ENCODE measurements at regions of chr1 and their contacts with region 1.

Region 1: GRCh38 chr1:212455803-212456528 is 23.2 kb downstream of the NENF start:
- DNase-seq: peak; percentile 88
- H3K4me3 Mint-ChIP-seq: no peak overlapping the region
- H3K27ac Mint-ChIP-seq: no peak overlapping the region
- H3K4me1 Mint-ChIP-seq: peaks cover 3% of the 10 kb centered on the region
- H3K27me3 Mint-ChIP-seq: no peaks in the 10 kb centered on the region

Region 2: GRCh38 chr1:211698161-211699026 is 757.6 kb before region 1 on chr1:
- CTCF ChIA-PET with region 1: interaction called, 36 read pairs
- POLR2A ChIA-PET with region 1: no interaction called
- intact Hi-C with region 1: loop called (anchors 5 kb)
- DNase-seq: peak; percentile 90
- H3K4me3 Mint-ChIP-seq: peak overlapping the region; percentile 22
- H3K27ac Mint-ChIP-seq: no peak overlapping the region
- H3K4me1 Mint-ChIP-seq: peaks cover 16% of the 10 kb centered on the region
- H3K27me3 Mint-ChIP-seq: no peaks in the 10 kb centered on the region

Region 3: GRCh38 chr1:212062832-212063438 is 393.0 kb before region 1 on chr1:
- CTCF ChIA-PET with region 1: interaction called, 75 read pairs
- POLR2A ChIA-PET with region 1: no interaction called
- intact Hi-C with region 1: loop called (anchors 2 kb)
- DNase-seq: no peak
- H3K4me3 Mint-ChIP-seq: no peak overlapping the region
- H3K27ac Mint-ChIP-seq: no peak overlapping the region
- H3K4me1 Mint-ChIP-seq: peaks cover 4% of the 10 kb centered on the region
- H3K27me3 Mint-ChIP-seq: no peaks in the 10 kb centered on the region

Region 4: DNA sequence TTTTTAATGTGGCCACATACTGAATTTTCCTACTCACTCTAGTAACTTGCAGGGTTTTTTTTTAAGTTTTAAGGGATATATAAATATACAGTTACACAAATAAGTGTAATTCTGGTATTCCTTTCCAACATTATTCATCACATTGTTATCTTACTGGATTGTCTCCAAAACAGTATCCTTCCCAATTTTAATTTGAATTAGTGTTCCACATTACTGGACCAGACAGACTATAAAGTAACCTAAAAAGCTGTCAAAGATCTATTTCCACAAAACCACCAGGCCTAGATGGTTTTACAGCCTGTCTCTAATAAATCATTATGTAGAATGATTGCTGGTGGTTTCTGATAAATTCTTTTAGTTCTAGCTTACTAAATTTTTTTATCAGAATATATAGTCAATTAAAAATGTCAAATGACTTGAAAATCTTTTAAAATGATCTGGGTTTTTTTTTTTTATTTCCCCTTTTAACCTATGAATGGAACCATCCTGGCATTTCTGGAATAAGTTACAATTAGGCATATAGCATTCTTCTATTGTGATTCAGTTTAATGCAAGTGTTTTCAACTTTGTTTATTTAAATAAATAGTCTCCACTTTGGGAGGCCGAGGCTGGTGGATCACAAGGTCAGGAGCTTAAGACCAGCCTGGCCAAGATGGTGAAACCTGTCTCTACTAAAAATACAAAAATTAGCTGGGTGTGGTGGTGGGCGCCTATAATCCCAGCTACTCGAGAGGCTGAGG is 100.6 kb before region 1 on chr1:
- CTCF ChIA-PET with region 1: interaction called, 21 read pairs
- POLR2A ChIA-PET with region 1: no interaction called
- intact Hi-C with region 1: no loop called
- DNase-seq: no peak
- H3K4me3 Mint-ChIP-seq: no peak overlapping the region
- H3K27ac Mint-ChIP-seq: no peak overlapping the region
- H3K4me1 Mint-ChIP-seq: peaks cover 22% of the 10 kb centered on the region
- H3K27me3 Mint-ChIP-seq: no peaks in the 10 kb centered on the region

Region 5: DNA sequence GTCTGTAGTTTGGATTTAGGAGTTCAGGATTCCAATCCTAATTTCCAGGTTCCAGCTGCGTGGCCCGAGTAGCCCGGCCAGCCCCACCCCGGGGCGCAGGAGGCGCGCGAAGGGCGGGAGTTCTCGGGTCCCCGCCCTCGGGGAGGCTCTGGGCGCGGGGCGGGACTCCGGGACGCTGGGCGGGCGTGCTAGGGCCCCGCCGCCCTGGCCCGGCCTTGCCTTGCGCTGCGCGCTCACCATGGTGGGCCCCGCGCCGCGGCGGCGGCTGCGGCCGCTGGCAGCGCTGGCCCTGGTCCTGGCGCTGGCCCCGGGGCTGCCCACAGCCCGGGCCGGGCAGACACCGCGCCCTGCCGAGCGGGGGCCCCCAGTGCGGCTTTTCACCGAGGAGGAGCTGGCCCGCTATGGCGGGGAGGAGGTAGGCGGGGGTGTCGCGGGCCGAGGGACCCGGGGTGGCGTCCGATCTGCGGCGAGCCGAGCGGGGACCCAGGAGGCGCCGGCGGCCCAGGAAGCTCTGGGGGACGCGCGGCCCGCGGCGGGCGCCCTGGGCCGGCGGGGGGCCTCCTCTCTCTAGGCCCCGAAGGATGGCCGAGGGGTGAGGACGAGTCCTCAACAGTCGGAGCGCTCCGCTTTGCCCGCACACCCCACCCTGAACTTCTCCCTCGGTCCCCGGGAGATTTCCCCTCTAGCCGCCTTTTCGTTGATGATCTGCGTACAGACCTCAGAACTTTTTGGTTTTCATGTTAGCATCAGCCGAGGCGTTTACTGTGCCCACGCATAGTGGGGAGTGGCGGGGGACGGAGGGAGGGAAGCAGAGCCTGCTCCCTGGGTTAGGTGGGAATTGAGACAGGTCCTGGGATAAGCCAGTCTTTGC is 23.0 kb before region 1 on chr1 and contains the start of gene NENF:
- CTCF ChIA-PET with region 1: interaction called, 32 read pairs
- POLR2A ChIA-PET with region 1: no interaction called
- intact Hi-C with region 1: no loop called
- DNase-seq: peak; percentile 84
- H3K4me3 Mint-ChIP-seq: peak within 1 kb of the TSS; percentile 73
- H3K27ac Mint-ChIP-seq: no peak within 1 kb of the TSS
- H3K4me1 Mint-ChIP-seq: peaks cover 33% of the 10 kb centered on the region
- H3K27me3 Mint-ChIP-seq: no peaks in the 10 kb centered on the region
- total RNA-seq, gene NENF: 38.4 to 42.7 TPM

Region 6: DNA sequence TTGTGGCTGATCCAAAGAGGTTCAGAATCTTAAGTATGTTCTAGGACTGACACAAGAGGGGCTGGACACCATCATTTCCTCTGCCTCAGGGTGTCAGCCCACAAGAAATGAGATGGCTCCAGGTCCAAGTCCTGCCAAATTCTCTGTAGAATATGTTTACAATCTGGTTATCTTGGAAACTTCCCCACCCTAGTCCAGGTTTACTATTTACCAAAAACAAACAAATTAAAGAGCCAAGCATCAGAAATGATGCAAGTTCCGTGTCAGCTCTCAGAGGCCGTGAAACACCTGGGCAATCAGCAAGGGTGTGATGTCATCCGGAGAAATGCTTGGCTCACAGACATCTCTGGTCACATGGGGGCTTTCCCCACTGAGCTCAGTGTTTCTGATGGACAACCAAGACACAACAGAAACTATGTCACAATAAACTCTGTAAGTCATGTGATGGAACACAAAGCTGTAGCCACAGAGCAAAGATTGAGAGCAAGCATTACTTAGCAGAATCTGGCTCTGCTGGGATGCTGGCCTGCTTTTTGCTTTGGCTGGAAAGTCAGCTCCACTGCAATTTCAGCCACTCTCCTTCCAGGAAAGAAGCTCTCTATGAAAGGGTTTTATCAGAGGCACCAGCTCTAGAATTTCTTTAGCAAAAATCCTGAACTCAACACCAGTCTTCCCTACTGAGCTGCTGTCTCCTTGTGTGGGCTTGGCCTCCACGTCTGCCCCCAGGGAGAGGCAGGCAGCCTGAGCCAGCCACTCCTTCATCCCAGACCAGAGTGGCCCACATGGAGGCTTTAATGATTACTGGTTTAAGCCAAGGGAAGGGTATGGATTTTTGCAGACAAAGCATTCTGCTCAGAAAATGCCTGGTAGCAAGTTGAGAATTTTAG is 32.7 kb after region 1 on chr1:
- CTCF ChIA-PET with region 1: interaction called, 10 read pairs
- POLR2A ChIA-PET with region 1: no interaction called
- intact Hi-C with region 1: no loop called
- DNase-seq: peak; percentile 69
- H3K4me3 Mint-ChIP-seq: no peak overlapping the region
- H3K27ac Mint-ChIP-seq: peak overlapping the region; percentile 36
- H3K4me1 Mint-ChIP-seq: peaks cover 7% of the 10 kb centered on the region
- H3K27me3 Mint-ChIP-seq: no peaks in the 10 kb centered on the region

Region 7: DNA sequence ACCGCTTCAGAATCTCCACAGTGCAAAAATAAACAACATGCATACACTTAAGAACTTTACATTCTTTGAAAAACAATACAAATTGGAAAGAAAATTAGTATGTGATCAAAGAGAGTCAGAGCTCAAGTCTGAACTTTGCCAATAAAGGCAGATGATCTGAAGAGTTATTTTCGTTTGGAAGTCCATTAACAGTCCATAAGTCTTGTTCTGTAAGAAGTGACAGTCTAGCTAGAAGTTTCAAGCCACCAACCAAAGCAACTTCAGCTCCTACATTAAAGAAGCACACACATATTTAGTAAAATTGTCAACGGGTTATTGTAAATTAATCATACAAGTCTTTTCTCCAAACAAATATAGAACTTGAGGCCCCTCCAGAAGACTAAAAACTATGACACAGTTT is 539.0 kb after region 1 on chr1:
- CTCF ChIA-PET with region 1: interaction called, 17 read pairs
- POLR2A ChIA-PET with region 1: no interaction called
- intact Hi-C with region 1: loop called (anchors 1 kb)
- DNase-seq: no peak
- H3K4me3 Mint-ChIP-seq: no peak overlapping the region
- H3K27ac Mint-ChIP-seq: no peak overlapping the region
- H3K4me1 Mint-ChIP-seq: peaks cover 10% of the 10 kb centered on the region
- H3K27me3 Mint-ChIP-seq: no peaks in the 10 kb centered on the region